Activated T-helper 2 cell treated with anti-CD3 and anti-CD28 coated beads, Interferon-gamma antibody, Interleukin-2, Interleukin-4, amounts not matched to agents 10 μg/mL and 5 μg/mL and 100 μg/mL, durations not matched to agents 14 hours and 24 hours and 36 hours (primary cell): ENCODE measurements at regions of chr3 and their contacts with region 1.

Region 1: DNA sequence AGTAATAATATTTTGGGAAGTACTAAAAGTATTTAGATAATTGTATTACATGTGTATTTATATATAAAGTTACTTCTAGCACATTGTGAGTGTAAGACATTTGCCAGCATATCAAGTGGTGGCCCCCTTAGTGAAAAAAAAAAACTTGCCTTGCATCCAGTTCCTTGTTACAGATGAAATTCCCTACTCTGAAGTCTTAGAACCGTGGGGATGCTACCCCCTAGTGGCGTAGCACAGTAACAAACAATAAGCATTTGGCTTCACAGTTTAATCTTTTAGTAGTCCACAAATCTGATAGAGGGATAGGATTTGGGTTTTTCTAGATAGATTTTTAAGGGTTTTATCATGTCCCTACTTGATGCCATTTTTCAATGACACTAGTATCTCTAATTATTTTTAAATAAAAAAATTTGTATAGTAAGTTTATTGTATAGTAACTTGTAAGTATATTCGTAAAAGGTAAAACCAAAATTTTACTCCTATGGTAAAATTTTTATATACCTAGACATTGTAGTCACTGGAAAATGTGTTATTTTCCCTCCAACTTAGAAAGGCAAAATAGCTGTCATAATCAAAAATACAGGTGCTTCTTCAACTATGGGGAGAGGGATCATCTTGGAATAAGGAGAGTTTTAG is 14.3 kb downstream of the SMC4 start:
- DNase-seq: peak; percentile 60
- H3K4me3 Mint-ChIP-seq: no peak overlapping the region
- H3K27ac Mint-ChIP-seq: no peak overlapping the region
- H3K4me1 Mint-ChIP-seq: peaks cover 51% of the 10 kb centered on the region
- H3K27me3 Mint-ChIP-seq: no peaks in the 10 kb centered on the region

Region 2: DNA sequence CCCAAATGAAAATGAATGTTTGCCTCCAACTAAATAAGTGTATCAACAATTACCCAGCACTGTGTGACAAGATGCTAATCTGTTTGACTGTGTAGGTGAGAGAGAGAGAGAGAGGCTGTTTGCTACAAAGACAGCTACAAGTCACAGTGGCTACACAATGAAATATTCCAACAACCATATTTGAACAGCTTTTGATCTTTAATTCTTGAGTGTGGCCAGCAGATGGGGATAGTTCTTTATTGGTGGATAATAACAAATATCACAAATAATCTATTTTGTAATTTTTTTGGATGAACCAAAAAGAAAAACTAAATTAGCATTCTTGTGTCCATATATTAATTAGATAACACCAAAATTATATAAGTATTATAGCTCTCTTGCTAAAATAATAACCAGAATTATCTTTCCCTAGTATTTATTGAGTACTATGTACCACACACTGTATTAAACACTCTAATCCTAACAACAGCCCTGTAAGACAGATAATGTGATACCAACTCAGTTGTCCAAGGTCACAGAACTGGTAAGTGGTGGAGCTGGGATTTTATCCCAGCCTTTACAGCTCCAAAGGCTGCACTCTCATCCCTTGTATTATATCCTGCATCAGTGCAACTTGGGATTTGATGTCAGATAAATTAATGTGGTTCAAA is 250.4 kb before region 1 on chr3:
- intact Hi-C with region 1: loop called (anchors 1 kb)
- DNase-seq: no peak
- H3K4me3 Mint-ChIP-seq: no peak overlapping the region
- H3K27ac Mint-ChIP-seq: no peak overlapping the region
- H3K4me1 Mint-ChIP-seq: peaks cover 1% of the 10 kb centered on the region
- H3K27me3 Mint-ChIP-seq: peaks cover 37% of the 10 kb centered on the region

Region 3: DNA sequence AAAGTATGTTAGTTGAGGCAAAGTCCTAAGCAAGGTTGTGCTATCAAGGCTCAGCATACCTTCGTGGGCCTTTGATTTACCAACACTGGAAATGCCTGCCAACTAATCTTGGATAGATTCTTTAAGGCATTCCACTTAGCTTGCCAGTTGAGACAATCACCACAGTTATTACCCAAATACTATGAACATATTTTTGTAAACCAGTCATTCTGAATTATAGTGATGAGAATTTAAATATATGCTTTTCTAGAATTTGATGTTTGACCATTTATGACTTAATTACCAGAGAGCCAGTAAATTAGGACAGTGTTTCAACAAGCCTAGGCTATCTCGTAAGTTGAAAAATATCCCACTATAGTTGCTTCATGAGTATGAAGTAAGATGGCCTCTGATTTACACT is 20.3 kb after region 1 on chr3:
- intact Hi-C with region 1: loop called (anchors 1 kb)
- DNase-seq: no peak
- H3K4me3 Mint-ChIP-seq: no peak overlapping the region
- H3K27ac Mint-ChIP-seq: no peak overlapping the region
- H3K4me1 Mint-ChIP-seq: peaks cover 34% of the 10 kb centered on the region
- H3K27me3 Mint-ChIP-seq: no peaks in the 10 kb centered on the region

Region 4: DNA sequence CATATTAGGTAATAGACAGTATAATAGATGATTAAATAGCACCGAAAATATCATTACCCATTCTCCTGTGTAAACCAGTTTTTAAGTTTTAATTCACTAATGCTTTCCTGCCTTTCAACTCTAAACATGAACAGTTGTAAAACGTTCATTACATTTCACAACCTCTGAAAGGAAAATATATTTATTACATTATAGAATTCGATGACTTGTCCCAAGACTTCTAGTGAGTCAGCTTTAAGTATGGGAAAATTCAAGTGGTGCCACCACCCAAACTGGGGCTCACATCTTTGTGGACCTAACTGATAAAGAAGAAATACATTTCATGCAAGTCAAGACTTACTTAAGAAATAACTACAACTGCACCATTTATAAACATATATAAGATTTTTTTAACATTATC is 33.8 kb after region 1 on chr3:
- intact Hi-C with region 1: no loop called
- DNase-seq: no peak
- H3K4me3 Mint-ChIP-seq: peak overlapping the region; percentile 91
- H3K27ac Mint-ChIP-seq: no peak overlapping the region
- H3K4me1 Mint-ChIP-seq: peaks cover 49% of the 10 kb centered on the region
- H3K27me3 Mint-ChIP-seq: no peaks in the 10 kb centered on the region